GM12878 (cell line): ENCODE measurements at regions of chr17 and their contacts with region 1.

Region 1: DNA sequence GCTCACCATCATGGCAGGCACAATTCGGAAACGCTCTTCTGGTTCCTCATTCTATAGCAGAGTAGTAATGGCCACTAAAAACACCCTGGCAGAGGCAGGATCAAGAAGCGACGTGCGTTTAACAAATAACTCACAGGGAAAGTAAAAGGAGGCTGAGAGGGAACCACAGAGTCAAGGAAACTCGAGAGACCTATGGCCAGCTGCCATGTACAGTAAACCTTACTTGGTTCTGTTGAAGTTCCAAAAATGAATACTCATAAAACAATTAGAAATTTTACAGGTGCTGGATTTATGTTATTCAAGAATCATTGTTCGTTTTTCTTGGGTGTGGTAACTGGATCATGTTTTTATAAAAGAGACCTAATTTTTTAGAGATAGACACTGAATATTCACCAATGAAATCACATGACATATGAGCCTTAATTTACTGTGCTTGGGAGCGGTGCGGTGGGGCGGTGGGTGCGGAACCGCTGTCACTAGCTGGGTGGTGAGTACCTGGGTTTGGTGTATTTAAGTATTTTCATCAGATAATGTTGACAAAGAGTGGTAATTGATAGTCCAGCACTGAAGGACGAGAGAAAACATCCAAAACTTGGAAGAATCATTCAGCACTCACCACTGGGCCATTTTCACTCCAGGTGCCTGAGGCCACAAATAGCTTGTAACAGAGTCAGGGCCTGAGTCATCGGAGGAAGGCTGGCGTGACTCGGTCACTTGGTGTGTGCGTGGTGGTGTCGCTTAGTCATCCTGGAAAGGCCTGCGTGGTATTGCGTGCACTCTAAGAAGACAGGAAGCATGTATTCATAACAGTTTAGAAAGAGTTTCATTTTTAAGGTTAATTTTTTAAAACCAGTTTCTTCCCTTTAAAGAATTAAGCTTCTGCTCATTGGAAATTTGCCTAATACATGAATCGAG is 135.4 kb upstream of the CHMP6 start:
- DNase-seq: peak; percentile 77
- ATAC-seq: peak; percentile 98
- H3K4me3 ChIP-seq: no peak overlapping the region
- H3K27ac ChIP-seq: peak overlapping the region; percentile 96
- H3K4me1 ChIP-seq: peaks cover 26% of the 10 kb centered on the region
- H3K27me3 ChIP-seq: no peaks in the 10 kb centered on the region
- CTCF ChIP-seq: no peak
- EP300 ChIP-seq: peak; percentile 98 to 99
- POLR2A ChIP-seq: no peak; the same call in 1 of the 2 replicates
- RAD21 ChIP-seq: peak; percentile 27; the same call in 1 of the 2 replicates

Region 2: DNA sequence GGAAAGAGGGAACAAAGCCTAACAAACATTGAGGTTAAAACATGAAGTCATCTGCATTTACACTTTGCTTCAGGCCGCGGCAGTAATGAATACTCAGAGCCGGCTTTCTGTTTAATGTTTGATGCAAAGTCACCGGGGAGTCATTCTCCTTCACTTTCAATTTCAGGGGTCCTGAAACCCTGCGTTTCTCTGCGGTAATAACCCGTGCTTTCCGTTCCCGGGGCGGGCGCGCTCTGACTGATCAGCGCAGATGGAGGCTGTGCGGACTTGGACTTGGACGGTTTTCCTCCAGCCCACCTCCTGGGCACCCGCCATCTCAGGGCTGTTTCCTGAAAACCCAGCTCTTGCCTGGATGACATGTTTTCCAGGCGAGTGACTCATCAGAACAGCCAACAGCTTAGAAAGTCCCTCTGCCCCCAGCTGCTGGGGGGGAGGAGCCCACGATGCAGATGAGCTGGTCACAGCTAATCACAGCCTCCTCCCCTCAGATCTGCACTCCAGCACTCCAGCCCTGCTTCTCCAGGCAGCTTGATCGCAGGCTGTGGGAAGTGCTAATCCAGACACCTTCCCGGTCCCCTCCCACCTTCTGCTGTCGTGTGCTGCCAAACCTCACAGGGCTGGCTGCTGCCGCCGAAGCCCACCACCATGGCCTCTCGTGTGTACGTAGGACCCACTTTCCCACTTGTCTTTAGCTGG is 23.2 kb before region 1 on chr17:
- CTCF ChIA-PET with region 1: interaction called, 6 read pairs
- POLR2A ChIA-PET with region 1: interaction called, 9 read pairs
- RAD21 ChIA-PET with region 1: interaction called, 12 read pairs
- SMC1A ChIA-PET with region 1: interaction called, 11 read pairs
- in situ Hi-C with region 1: no loop called
- intact Hi-C with region 1: loop called (anchors 1 kb)
- DNase-seq: peak; percentile 73
- ATAC-seq: peak; percentile 96
- H3K4me3 ChIP-seq: peak overlapping the region; percentile 65; the same call in 1 of the 2 replicates
- H3K27ac ChIP-seq: peak overlapping the region; percentile 95
- H3K4me1 ChIP-seq: peaks cover 16% of the 10 kb centered on the region
- H3K27me3 ChIP-seq: no peaks in the 10 kb centered on the region
- CTCF ChIP-seq: no peak; a peak in 1 of 6 replicates
- EP300 ChIP-seq: peak in 1 of 2 experiments; percentile 76; a peak in 3 of 4 replicates
- POLR2A ChIP-seq: peak; percentile 79
- RAD21 ChIP-seq: no peak

Region 3: GRCh38 chr17:81009136-81009535 is 152.9 kb after region 1 on chr17:
- CTCF ChIA-PET with region 1: no interaction called
- POLR2A ChIA-PET with region 1: no interaction called
- RAD21 ChIA-PET with region 1: no interaction called
- SMC1A ChIA-PET with region 1: no interaction called
- in situ Hi-C with region 1: no loop called
- intact Hi-C with region 1: no loop called
- DNase-seq: no peak
- ATAC-seq: no peak
- H3K4me3 ChIP-seq: no peak overlapping the region
- H3K27ac ChIP-seq: no peak overlapping the region
- H3K4me1 ChIP-seq: no peaks in the 10 kb centered on the region
- H3K27me3 ChIP-seq: peaks cover 0 to 8% of the 10 kb centered on the region in 2 experiments; a peak in 3 of 4 replicates
- CTCF ChIP-seq: no peak
- EP300 ChIP-seq: no peak
- POLR2A ChIP-seq: no peak
- RAD21 ChIP-seq: no peak